Right ventricle myocardium inferior (tissue), 1 donor: ENCODE measurements at regions of chr16 and their contacts with region 1.

Region 1: DNA sequence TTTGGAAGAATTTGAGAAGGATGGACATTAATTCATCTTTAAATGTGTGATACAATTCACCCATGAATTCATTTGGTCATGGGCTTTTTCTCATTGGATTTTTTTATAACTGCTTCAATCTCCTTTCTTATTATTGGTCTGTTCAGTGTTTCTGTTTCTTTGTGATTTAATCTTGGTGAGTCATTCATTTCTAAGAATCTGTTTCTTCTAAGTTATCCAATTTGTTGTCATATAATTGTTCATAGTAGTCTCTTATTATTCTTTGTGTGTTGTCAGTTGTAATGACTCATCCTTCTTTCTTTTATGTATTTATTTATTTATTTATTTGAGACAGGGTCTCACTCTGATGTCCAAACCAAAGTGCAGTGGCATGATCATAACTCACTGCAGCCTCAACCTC is 146.1 kb upstream of the ZNF267 start:
- DNase-seq: no peak
- ATAC-seq: no peak

Region 2: DNA sequence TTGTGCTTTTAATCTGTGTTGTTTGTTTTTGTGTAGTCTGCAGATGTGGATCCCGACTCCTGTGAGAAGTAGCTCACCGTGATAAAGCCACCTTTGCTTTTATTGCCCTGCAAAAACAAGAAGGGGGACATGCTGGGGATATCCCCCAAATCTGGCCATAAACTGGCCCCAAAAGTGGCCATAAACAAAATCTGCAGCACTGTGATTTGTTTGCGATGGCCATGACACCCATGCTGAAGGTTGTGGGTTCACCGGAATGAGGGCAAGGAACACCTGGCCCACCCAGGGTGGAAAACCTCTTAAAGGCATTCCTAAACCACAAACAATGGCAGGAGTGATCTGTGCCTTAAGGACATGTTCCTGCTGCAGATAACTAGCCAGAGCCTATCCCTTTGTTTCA is 184.8 kb before region 1 on chr16:
- intact Hi-C with region 1: loop called (anchors 10 kb)
- DNase-seq: no peak
- ATAC-seq: no peak